ENCODE measurements at regions of chr18 and their contacts with region 1.

Region 1: DNA sequence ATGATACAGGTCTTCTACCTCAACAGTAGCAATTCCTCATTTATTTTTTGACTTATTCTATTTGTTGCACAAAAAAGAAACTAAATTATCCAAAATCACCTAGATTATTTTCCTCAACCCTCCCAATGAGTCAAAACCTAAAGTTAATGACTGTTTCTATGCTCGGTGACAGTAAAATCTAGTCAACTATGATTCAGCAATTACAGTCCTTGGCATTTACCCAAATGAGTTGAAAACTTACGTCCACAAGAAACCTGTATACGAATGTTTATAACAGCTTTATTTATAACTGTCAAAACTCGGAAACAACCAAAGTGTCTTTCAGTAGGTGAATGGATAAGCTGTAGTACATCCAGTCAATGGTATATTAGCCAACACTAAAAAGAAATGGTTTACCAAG is 439.3 kb downstream of the CBLN2 start:
- DNase-seq: no peak
- ATAC-seq: no peak
- H3K4me3 ChIP-seq: no peak overlapping the region
- H3K27ac ChIP-seq: no peak overlapping the region
- H3K4me1 ChIP-seq: no peaks in the 10 kb centered on the region
- H3K27me3 ChIP-seq: no peaks in the 10 kb centered on the region
- CTCF ChIP-seq: no peak
- POLR2A ChIP-seq: no peak

Region 2: GRCh38 chr18:72091369-72091768 is 13.5 kb before region 1 on chr18:
- intact Hi-C with region 1: loop called in 1 of 10 experiments (anchors 2 kb)
- DNase-seq: no peak
- ATAC-seq: no peak
- H3K4me3 ChIP-seq: no peak overlapping the region
- H3K27ac ChIP-seq: no peak overlapping the region
- H3K4me1 ChIP-seq: no peaks in the 10 kb centered on the region
- H3K27me3 ChIP-seq: no peaks in the 10 kb centered on the region
- CTCF ChIP-seq: no peak
- POLR2A ChIP-seq: no peak